Upper lobe of right lung (tissue), 1 donor: ENCODE measurements at regions of chr9 and their contacts with region 1.

Region 1: DNA sequence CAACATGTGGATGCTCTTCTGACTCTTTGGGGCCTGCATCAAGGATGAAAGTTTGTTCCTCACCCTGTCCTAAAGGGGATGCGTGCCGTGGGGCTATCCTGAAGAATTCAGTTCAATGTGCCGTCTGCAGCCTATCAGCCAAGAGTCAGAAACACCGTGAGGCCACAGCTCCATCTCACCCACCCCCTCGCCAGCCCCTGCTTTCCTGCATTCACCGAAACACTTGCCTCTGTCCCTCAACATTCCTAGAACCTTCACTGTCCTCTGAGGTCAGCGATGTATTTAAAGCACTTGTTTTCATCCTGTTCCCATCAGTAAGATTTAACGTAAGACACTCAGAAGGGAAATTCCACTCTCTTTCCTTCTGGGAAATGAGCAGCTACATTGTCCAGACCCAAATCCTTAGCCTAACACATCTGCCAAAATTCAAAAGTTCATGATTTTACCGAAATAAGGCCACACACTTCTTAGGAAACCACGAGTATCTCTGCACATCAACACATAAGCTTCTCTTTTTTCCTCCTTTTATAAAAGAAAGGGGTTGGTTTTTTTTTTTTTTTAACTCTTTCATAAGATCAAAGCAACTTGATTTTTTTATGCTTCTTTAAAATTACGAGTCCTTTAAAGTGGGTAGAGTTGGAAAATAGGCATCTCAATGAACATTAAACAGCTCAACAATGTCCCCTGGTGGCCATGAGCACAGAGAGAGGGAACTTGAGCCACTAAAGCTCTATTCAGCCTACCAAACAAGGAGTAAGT is 100.7 kb downstream of the SUSD1 start:
- DNase-seq: no peak
- ATAC-seq: peak; percentile 92
- H3K4me3 ChIP-seq: no peak overlapping the region
- H3K27ac ChIP-seq: peak overlapping the region; percentile 61
- H3K4me1 ChIP-seq: peaks cover 20% of the 10 kb centered on the region
- H3K27me3 ChIP-seq: no peaks in the 10 kb centered on the region
- CTCF ChIP-seq: peak; percentile 90

Region 2: GRCh38 chr9:111896353-111896958 is 178.0 kb before region 1 on chr9 and contains the start of gene UGCG:
- intact Hi-C with region 1: loop called (anchors 5 kb)
- DNase-seq: peak; percentile 95
- ATAC-seq: peak; percentile 99
- H3K4me3 ChIP-seq: peak within 1 kb of the TSS; percentile 98
- H3K27ac ChIP-seq: peak within 1 kb of the TSS; percentile 90
- H3K4me1 ChIP-seq: peaks cover 25% of the 10 kb centered on the region
- H3K27me3 ChIP-seq: no peaks in the 10 kb centered on the region
- CTCF ChIP-seq: no peak
- total RNA-seq, gene UGCG: 50.7 TPM